ENCODE measurements at regions of chr7 and their contacts with region 1.

Region 1: DNA sequence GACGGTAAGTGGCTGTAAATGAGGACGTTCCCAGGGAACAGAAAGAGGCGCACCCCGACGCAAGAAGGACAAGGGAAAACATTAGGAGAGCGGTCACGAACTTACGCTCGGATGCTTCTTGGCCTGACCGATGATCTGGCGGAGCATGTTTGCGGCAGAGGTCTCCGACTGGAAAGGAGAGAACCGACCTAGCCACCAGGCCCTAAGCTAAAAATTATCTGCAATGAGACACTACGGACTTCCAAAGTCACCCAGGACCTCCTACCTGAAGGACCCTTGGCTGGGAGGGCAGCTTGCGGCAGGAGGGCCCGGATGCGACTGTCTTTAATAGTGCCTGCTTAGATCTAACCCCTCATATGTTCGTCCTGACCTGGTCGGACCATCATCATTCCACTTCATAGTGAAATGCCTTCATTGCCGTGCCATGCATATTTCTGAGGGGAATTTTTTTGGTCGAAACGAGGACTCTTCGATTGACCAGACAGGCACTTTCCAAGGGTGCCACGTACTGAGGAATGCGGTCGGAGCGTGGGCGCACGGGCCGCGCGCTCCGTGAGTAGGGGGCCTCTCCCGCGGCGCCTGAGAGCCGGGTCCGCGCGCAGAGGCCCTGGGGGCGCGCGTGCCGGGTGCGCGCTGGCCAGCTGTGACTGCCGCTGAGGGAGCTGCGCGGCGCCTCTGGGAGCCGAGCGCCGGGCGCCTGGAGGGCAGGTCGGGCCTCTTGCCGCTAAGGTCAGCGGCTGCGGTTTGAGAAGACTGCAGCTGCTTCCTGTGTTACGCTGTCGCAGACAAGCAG is 33.6 kb upstream of the PHF14 start:
- DNase-seq: peak; percentile 96
- H3K4me3 ChIP-seq: peak overlapping the region; percentile 60
- H3K27ac ChIP-seq: peak overlapping the region; percentile 96
- H3K4me1 ChIP-seq: peaks cover 20% of the 10 kb centered on the region
- H3K27me3 ChIP-seq: no peaks in the 10 kb centered on the region
- CTCF ChIP-seq: no peak

Region 2: DNA sequence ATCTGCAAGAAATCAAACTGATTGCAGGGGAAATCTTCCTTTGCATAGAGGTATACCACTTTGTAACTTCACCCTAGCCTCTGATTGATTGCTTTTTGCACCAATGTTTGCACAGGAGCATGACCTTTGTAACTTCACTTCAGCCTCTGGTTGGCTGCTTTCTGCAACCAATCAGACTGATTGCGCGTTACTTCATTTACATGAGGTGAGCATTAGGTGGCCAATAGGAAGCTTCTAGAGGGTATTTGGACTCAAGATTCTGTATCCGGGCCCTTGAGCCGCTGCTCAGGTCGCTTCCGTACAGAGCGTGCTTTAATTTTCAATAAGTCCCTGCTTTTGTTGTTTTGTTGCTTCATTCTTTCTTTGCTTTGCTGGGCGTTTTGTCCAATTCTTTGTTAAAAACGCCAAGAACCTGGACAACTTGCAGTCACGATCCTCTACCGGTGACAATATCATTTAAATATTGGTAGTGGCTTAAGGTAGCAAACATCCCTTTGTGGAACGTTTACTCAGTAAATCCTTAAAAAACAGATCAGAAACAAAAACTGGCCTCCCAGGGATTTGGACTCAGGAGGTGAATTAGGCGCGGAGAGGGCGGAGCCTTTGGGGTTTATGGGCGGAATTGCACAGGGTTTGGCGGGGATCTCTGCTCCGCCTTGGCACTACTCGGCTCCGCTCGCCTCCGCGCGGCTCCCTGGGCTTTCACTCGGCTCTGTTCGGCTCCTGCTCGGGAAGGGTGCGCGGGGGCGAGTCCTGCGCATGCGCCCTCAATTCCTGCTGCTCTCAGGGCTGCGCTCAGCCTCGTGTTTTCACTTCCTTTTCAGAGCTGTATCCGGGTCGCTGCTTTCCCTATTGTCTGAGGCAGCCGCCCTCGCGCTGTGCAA is 33.2 kb after region 1 on chr7 and contains the start of gene PHF14:
- CTCF ChIA-PET with region 1: no interaction called
- POLR2A ChIA-PET with region 1: no interaction called
- intact Hi-C with region 1: loop called (anchors 2 kb)
- DNase-seq: peak; percentile 99
- H3K4me3 ChIP-seq: peak within 1 kb of the TSS; percentile 82
- H3K27ac ChIP-seq: peak within 1 kb of the TSS; percentile 88
- H3K4me1 ChIP-seq: peaks cover 12% of the 10 kb centered on the region
- H3K27me3 ChIP-seq: no peaks in the 10 kb centered on the region
- CTCF ChIP-seq: no peak
- total RNA-seq, gene PHF14: 75.4 and 79.5 TPM in 2 replicates

Region 3: DNA sequence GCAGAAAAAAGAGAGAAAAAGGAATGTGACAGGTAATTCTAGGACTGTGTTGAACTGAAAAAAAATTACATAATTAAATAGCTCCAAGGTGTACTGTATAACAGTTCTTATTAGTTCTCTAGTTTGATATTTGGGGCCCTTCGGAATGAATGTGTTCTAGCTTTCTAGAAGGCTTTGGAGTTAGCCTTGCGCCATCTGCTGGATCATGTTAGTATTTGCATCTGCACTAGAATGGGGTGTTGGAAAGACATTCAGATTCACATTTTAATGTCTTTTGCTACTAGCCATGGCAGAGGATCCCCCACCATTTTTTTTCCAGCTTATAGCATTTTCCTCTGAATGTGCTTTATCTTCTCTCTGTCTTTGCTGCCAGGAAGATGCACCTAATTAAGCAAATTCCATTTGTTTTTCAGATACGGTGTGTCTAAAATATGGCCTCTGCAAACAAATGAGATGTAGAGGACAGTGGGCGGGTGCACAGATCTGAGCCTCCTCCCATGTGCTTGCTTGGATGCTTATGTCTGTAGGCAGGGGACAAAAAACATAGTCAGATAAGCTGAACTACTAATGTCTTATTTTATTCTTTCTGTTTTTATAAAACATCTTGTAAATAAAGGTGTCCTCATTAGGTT is 272.1 kb after region 1 on chr7:
- CTCF ChIA-PET with region 1: no interaction called
- POLR2A ChIA-PET with region 1: no interaction called
- intact Hi-C with region 1: loop called (anchors 2 kb)
- DNase-seq: peak; percentile 84
- H3K4me3 ChIP-seq: no peak overlapping the region
- H3K27ac ChIP-seq: no peak overlapping the region
- H3K4me1 ChIP-seq: peaks cover 15% of the 10 kb centered on the region
- H3K27me3 ChIP-seq: no peaks in the 10 kb centered on the region
- CTCF ChIP-seq: peak; percentile 90